T-cell (primary cell): ENCODE measurements at regions of chr5 and their contacts with region 1.

Region 1: DNA sequence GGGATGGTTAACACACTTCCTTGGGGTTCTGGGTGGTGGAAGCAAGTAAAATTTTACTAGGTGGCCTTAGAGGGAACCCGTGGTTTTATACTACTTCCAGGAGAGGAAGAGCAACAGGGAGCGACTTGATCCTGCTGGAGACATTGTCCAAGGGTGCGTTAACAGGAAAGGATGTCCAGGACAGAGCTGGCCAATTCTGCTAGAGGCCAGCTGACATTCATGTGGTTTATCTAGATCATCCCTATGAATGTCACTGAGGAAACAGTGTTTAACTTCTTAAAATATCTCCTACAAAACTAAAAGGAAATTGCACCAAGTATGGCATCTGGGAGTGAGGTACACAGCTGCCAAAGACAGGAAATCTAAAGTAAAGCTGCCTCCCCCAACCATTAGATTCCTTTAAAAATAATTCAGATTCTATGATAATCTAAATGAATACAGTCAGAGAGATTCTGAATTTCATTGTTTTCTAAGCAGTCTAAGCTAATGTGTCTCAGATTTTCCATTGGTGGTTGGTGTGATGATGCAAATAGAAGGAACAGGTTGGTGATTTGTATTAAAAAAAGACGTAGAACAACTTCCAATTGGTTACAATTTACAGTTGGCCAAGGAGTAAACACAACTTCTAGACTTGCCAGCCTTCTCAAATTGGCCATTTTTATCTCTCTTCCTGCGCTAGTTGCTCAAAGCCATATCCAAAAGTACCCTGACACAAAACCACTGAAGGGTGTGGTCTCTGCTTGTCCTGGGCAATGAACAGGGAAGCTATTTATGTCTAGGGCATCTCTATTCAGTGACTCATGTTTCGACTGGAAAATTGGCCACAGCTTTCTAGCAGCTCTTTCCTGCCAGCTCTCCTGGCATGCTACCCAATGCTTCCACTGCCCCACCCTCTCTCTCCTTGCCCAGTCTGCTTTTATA is 574.7 kb upstream of the MEF2C start:
- DNase-seq: peak in 1 of 35 experiments; percentile 1
- ATAC-seq: no peak
- H3K4me3 ChIP-seq: no peak overlapping the region
- H3K4me3 Mint-ChIP-seq: no peak overlapping the region
- H3K27ac ChIP-seq: no peak overlapping the region
- H3K27ac Mint-ChIP-seq: no peak overlapping the region
- H3K4me1 ChIP-seq: no peaks in the 10 kb centered on the region
- H3K4me1 Mint-ChIP-seq: no peaks in the 10 kb centered on the region
- H3K27me3 ChIP-seq: no peaks in the 10 kb centered on the region
- H3K27me3 Mint-ChIP-seq: no peaks in the 10 kb centered on the region

Region 2: GRCh38 chr5:88765171-88765570 is 692.5 kb before region 1 on chr5:
- CTCF ChIA-PET with region 1: interaction called in 1 of 2 experiments, 12 read pairs
- POLR2A ChIA-PET with region 1: no interaction called
- DNase-seq: no peak
- ATAC-seq: no peak
- H3K4me3 ChIP-seq: no peak overlapping the region
- H3K4me3 Mint-ChIP-seq: no peak overlapping the region
- H3K27ac ChIP-seq: no peak overlapping the region
- H3K27ac Mint-ChIP-seq: no peak overlapping the region
- H3K4me1 ChIP-seq: no peaks in the 10 kb centered on the region
- H3K4me1 Mint-ChIP-seq: no peaks in the 10 kb centered on the region
- H3K27me3 ChIP-seq: no peaks in the 10 kb centered on the region
- H3K27me3 Mint-ChIP-seq: peaks cover 5 to 7% of the 10 kb centered on the region in 2 donors

Region 3: GRCh38 chr5:89268460-89268859 is 189.2 kb before region 1 on chr5:
- CTCF ChIA-PET with region 1: no interaction called
- POLR2A ChIA-PET with region 1: no interaction called
- DNase-seq: peak in 1 of 35 experiments; percentile 1
- ATAC-seq: no peak
- H3K4me3 ChIP-seq: no peak overlapping the region
- H3K4me3 Mint-ChIP-seq: no peak overlapping the region
- H3K27ac ChIP-seq: no peak overlapping the region
- H3K27ac Mint-ChIP-seq: no peak overlapping the region
- H3K4me1 ChIP-seq: no peaks in the 10 kb centered on the region
- H3K4me1 Mint-ChIP-seq: peaks cover 0 to 2% (median 0%) of the 10 kb centered on the region in 3 donors
- H3K27me3 ChIP-seq: no peaks in the 10 kb centered on the region
- H3K27me3 Mint-ChIP-seq: no peaks in the 10 kb centered on the region